ENCODE measurements at regions of chr12 and their contacts with region 1.

Region 1: GRCh38 chr12:124703852-124704251 is 136.4 kb upstream of the NCOR2 start:
- DNase-seq: no peak

Region 2: GRCh38 chr12:124720004-124720680 is 16.3 kb after region 1 on chr12:
- intact Hi-C with region 1: loop called in 1 of 2 experiments (anchors 2 kb)
- DNase-seq: no peak

Measured in posterior vena cava (tissue), 2 donors.